Aorta (tissue), 5 donors: ENCODE measurements at regions of chr19 and their contacts with region 1.

Region 1: DNA sequence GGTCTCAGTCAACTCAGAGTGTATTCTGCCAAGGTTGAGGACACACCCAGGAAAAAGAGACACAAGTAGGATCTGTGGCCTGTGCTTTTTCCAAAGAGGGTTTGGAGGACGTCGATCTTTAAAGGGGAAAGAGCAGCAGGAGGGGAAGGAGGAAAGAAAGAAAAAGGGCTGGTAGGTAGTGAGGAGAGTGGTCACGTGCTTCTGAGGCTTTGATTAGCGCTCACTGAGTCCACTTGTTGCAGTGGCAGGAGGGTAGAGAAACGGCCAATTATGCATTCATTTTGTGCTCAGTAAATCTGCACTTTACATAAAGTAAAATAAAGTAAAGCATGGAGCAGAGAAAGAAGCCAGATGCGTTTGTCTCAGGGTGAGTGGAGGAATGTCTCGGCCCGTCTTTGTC is 126.0 kb upstream of the VSTM2B start:
- DNase-seq: no peak
- ATAC-seq: no peak
- H3K4me3 ChIP-seq: no peak overlapping the region
- H3K27ac ChIP-seq: no peak overlapping the region
- H3K4me1 ChIP-seq: no peaks in the 10 kb centered on the region
- H3K27me3 ChIP-seq: no peaks in the 10 kb centered on the region

Region 2: GRCh38 chr19:29379257-29380021 is 20.4 kb before region 1 on chr19:
- intact Hi-C with region 1: loop called in 1 of 2 experiments (anchors 1 kb)
- DNase-seq: no peak
- ATAC-seq: no peak
- H3K4me3 ChIP-seq: no peak overlapping the region
- H3K27ac ChIP-seq: no peak overlapping the region
- H3K4me1 ChIP-seq: no peaks in the 10 kb centered on the region
- H3K27me3 ChIP-seq: no peaks in the 10 kb centered on the region

Region 3: GRCh38 chr19:29428071-29428470 is 28.3 kb after region 1 on chr19:
- intact Hi-C with region 1: no loop called
- DNase-seq: no peak
- ATAC-seq: no peak
- H3K4me3 ChIP-seq: no peak overlapping the region
- H3K27ac ChIP-seq: no peak overlapping the region
- H3K4me1 ChIP-seq: no peaks in the 10 kb centered on the region
- H3K27me3 ChIP-seq: no peaks in the 10 kb centered on the region

Region 4: DNA sequence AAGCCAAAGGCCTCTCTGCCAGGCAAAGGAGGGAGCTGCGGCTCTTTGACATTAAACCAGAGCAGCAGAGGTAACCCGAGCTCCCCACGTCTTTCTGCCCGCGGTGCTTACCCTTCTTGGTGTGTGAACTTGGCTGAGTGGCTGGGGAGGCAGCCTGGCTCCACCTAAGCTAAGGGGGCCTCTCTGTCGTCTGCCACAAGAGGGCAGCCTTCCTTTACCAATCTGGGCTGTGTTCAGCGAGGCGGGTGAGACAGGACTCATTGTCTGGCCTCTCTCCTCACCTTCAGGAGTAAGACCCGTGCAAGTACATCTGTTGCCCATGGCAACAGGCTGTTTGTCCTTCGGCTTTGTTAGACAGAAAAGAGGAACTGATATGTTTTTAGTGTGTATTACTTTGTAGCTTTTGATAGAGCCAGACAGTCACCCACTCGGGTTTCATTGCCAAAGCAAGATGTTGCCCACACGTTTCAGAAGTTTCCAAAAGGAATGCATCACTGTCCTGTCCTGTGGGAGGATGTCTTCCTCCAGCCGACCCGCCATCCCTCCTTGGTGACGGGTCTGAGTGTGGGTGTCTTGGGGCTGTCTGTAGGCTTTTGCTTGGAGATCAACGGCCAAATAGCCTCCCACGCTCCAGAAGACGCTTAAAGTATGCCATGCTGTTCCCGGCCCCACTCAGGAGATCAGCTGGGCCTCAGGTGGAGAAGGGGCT is 210.9 kb after region 1 on chr19:
- intact Hi-C with region 1: no loop called
- DNase-seq: peak; percentile 87 to 91
- ATAC-seq: peak; percentile 88
- H3K4me3 ChIP-seq: no peak overlapping the region
- H3K27ac ChIP-seq: no peak overlapping the region
- H3K4me1 ChIP-seq: no peaks in the 10 kb centered on the region
- H3K27me3 ChIP-seq: no peaks in the 10 kb centered on the region